A549 (cell line): ENCODE measurements at regions of chr22 and their contacts with region 1.

Region 1: GRCh38 chr22:33018232-33018864 is 39.8 kb downstream of the SYN3 start:
- DNase-seq: peak; percentile 22 to 37
- ATAC-seq: peak; percentile 83 to 87
- H3K4me3 ChIP-seq: no peak overlapping the region
- H3K27ac ChIP-seq: no peak overlapping the region
- H3K4me1 ChIP-seq: no peaks in the 10 kb centered on the region
- CTCF ChIP-seq: peak; percentile 55
- EP300 ChIP-seq: no peak
- POLR2A ChIP-seq: no peak
- RAD21 ChIP-seq: peak; percentile 54 to 67; a peak in 4 of 5 replicates

Region 2: GRCh38 chr22:32558681-32559355 is 459.5 kb before region 1 on chr22:
- CTCF ChIA-PET with region 1: no interaction called
- POLR2A ChIA-PET with region 1: no interaction called
- DNase-seq: peak; percentile 51 to 86
- ATAC-seq: peak; percentile 92 to 93
- H3K4me3 ChIP-seq: no peak overlapping the region
- H3K27ac ChIP-seq: peak overlapping the region; percentile 77 to 83
- H3K4me1 ChIP-seq: peaks cover 34% of the 10 kb centered on the region
- CTCF ChIP-seq: no peak
- EP300 ChIP-seq: peak; percentile 49 to 58; a peak in 2 of 5 replicates
- POLR2A ChIP-seq: no peak
- RAD21 ChIP-seq: no peak

Region 3: GRCh38 chr22:32897400-32897799 is 120.9 kb before region 1 on chr22:
- CTCF ChIA-PET with region 1: no interaction called
- POLR2A ChIA-PET with region 1: no interaction called
- DNase-seq: no peak
- ATAC-seq: no peak
- H3K4me3 ChIP-seq: no peak overlapping the region
- H3K27ac ChIP-seq: no peak overlapping the region
- H3K4me1 ChIP-seq: no peaks in the 10 kb centered on the region
- CTCF ChIP-seq: no peak
- EP300 ChIP-seq: no peak
- POLR2A ChIP-seq: no peak
- RAD21 ChIP-seq: no peak

Region 4: GRCh38 chr22:33000342-33001280 is 17.7 kb before region 1 on chr22:
- CTCF ChIA-PET with region 1: interaction called, 13 read pairs
- POLR2A ChIA-PET with region 1: no interaction called
- DNase-seq: peak; percentile 8 to 14
- ATAC-seq: peak; percentile 86 to 90; a peak in 5 of 6 replicates
- H3K4me3 ChIP-seq: no peak overlapping the region
- H3K27ac ChIP-seq: no peak overlapping the region
- H3K4me1 ChIP-seq: no peaks in the 10 kb centered on the region
- CTCF ChIP-seq: peak; percentile 61
- EP300 ChIP-seq: no peak
- POLR2A ChIP-seq: no peak
- RAD21 ChIP-seq: peak; percentile 69 to 75

Region 5: GRCh38 chr22:33006220-33006954 is 12.0 kb before region 1 on chr22:
- CTCF ChIA-PET with region 1: interaction called, 13 read pairs
- POLR2A ChIA-PET with region 1: no interaction called
- DNase-seq: no peak
- ATAC-seq: no peak
- H3K4me3 ChIP-seq: no peak overlapping the region
- H3K27ac ChIP-seq: no peak overlapping the region
- H3K4me1 ChIP-seq: no peaks in the 10 kb centered on the region
- CTCF ChIP-seq: no peak
- EP300 ChIP-seq: no peak
- POLR2A ChIP-seq: no peak
- RAD21 ChIP-seq: no peak

Region 6: DNA sequence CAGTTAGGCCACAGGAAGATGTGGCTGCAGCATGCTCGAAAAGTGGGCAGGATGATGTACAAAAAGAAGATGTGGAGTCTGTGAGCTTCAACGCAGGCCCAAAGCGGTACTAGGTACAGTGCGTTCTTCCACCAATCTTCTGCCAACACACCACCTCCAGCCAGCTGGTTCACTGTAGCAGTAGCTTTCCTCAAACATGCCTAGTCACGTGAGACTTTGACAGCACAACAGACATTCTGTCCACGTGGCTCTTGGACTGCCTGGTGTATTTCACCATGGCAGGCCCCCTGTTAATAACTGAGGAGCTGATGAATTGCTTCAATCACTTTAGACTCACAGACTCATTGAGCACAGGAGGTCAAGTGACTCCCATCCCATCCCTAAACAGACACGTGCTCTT is 25.8 kb after region 1 on chr22:
- CTCF ChIA-PET with region 1: interaction called, 14 read pairs
- POLR2A ChIA-PET with region 1: no interaction called
- DNase-seq: no peak
- ATAC-seq: no peak
- H3K4me3 ChIP-seq: no peak overlapping the region
- H3K27ac ChIP-seq: no peak overlapping the region
- H3K4me1 ChIP-seq: no peaks in the 10 kb centered on the region
- CTCF ChIP-seq: no peak
- EP300 ChIP-seq: no peak
- POLR2A ChIP-seq: no peak
- RAD21 ChIP-seq: no peak

Region 7: DNA sequence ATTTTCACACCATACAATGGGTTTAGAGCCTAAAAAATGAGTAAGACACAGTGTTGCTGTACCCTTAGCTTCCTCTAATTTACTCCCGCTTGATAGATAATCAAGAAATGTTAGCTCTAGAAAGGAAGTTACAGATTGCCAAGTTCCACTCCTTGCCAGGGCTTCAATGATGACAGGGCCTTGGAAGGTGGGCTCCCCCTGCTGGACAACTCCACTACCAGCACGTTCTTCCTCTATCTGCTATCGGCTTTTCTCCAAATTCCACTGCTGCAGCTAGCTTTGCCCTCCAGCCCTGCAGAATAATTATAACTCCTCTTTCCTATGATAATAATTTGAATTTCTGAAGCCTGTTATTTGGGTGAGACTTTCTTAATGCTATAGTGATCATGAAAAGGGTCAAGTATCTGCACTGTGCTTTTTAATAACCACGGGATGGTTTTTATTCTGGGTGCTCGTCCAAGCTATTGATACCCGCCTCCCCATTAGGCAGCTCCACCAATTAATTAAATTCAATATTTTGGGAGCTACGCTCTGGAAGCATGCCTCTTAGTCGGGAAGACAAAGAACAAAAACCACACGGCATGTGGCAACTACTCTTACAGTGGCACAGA is 30.9 kb after region 1 on chr22:
- CTCF ChIA-PET with region 1: interaction called, 14 read pairs
- POLR2A ChIA-PET with region 1: no interaction called
- DNase-seq: peak; percentile 31 to 69
- ATAC-seq: peak; percentile 70 to 81; a peak in 5 of 6 replicates
- H3K4me3 ChIP-seq: no peak overlapping the region
- H3K27ac ChIP-seq: no peak overlapping the region
- H3K4me1 ChIP-seq: no peaks in the 10 kb centered on the region
- CTCF ChIP-seq: peak; percentile 55
- EP300 ChIP-seq: no peak
- POLR2A ChIP-seq: no peak
- RAD21 ChIP-seq: peak; percentile 17 to 47; a peak in 2 of 5 replicates

Region 8: DNA sequence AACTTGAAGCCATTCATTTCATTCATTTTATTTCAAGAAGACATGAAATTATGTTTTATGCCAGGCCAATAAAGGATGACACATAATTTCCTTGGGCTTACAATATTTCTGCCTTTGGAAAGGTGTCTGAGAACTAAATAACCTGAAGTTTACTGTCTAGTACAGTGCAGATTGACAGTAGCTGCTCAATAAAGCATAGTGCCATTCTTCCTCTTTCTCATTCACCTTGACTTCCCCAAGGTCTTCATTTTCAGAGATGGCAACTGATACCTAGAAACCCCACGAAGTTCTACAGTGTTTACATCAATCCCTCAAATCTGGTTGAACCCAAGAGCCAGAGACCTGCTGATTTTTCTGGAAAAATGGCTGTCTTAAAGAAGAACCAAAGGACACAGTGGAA is 184.1 kb after region 1 on chr22:
- CTCF ChIA-PET with region 1: interaction called, 44 read pairs
- POLR2A ChIA-PET with region 1: no interaction called
- DNase-seq: no peak
- ATAC-seq: no peak
- H3K4me3 ChIP-seq: no peak overlapping the region
- H3K27ac ChIP-seq: no peak overlapping the region
- H3K4me1 ChIP-seq: no peaks in the 10 kb centered on the region
- CTCF ChIP-seq: no peak
- EP300 ChIP-seq: no peak
- POLR2A ChIP-seq: no peak
- RAD21 ChIP-seq: no peak

Region 9: DNA sequence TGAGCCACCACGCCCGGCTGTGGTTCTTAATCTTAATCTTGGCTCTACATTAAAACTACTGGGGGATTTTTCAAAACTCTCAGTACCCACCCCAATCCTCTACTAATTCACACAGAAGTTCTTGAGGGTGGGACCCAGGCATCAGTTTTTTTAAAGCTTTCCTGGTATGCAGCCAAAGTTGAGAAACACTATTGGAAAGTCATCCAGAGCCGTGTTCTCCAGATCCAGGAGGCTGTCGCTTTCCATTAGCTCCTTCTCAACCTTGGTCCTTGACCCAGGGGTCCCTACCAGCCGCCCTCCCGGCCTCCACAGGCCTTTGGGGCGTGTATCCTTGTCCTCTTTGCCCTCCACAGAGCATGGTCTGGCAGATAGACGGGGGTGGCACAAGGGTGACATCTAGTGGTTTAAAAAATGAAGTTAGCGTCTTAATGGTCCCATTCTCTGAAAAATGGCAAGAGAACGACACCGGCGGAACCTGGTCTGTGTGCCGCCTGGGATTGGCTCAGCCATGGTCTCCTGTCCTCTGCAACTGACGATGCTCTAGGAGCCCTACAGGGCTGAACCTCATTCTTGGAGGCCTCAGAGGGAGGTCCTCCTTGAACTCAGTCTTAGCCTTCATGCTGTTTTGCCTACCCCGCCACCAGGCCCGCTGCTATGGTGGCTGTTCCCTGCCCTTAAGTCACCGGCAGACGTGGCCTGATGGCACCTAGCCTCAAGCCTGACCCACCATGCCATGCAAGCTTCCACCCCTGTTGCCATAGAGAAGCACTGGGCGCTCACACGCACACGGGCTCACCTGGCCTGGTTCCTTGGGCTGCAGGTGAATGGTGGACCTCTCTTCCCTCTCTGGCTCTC is 191.8 kb after region 1 on chr22:
- CTCF ChIA-PET with region 1: interaction called, 44 read pairs
- POLR2A ChIA-PET with region 1: no interaction called
- DNase-seq: peak; percentile 24 to 41
- ATAC-seq: peak; percentile 78 to 86
- H3K4me3 ChIP-seq: no peak overlapping the region
- H3K27ac ChIP-seq: no peak overlapping the region
- H3K4me1 ChIP-seq: no peaks in the 10 kb centered on the region
- CTCF ChIP-seq: peak; percentile 52
- EP300 ChIP-seq: no peak
- POLR2A ChIP-seq: no peak
- RAD21 ChIP-seq: peak; percentile 55 to 56; a peak in 3 of 5 replicates